Activated CD4-positive, alpha-beta T cell treated with anti-CD3 and anti-CD28 coated beads, Interleukin-2, amount 10 ng/mL, durations not matched to agents 7 days and 5 days (primary cell): ENCODE measurements at regions of chr5 and their contacts with region 1.

Region 1: GRCh38 chr5:151771259-151772028 is at the start of gene G3BP1:
- DNase-seq: peak; percentile 100
- H3K4me3 Mint-ChIP-seq: peak within 1 kb of the TSS; percentile 81
- H3K27ac Mint-ChIP-seq: peak within 1 kb of the TSS; percentile 94
- H3K4me1 Mint-ChIP-seq: peaks cover 37% of the 10 kb centered on the region
- H3K27me3 Mint-ChIP-seq: no peaks in the 10 kb centered on the region
- total RNA-seq, gene G3BP1: 212 to 221 TPM

Region 2: DNA sequence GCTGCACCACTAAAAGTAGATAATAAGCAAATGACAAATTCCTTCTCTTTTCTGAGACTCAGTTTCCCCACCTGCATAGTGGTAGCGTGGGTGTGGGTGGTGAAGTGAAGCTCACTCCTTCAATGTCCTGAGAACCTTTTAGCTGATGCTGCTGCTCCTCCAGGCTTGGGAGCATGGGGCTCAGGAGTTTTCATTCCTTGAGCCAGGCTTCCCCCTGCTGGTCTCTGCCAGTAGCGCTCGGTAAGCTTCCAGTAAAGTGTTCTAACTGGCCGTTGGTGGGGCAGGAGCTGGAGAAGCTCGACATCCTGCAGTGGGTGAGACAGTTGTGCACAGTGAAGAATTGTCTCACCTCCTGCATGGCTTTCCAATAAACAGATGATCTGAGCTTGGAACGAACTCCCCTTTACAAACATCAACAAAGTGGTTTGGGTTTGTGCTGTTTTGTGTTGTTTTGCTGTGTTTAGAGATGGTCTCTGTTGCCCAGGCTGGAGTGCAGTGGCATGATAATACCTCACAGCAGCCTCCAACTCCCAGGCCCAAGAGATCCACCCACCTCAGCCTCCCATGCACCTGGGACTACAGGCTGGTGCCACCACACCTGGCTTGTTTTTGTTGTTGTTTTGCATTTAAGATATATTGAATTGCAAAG is 119.3 kb before region 1 on chr5:
- CTCF ChIA-PET with region 1: interaction called, 14 read pairs
- POLR2A ChIA-PET with region 1: no interaction called
- DNase-seq: peak; percentile 72
- H3K4me3 Mint-ChIP-seq: no peak overlapping the region
- H3K27ac Mint-ChIP-seq: no peak overlapping the region
- H3K4me1 Mint-ChIP-seq: no peaks in the 10 kb centered on the region
- H3K27me3 Mint-ChIP-seq: peaks cover 8% of the 10 kb centered on the region

Region 3: DNA sequence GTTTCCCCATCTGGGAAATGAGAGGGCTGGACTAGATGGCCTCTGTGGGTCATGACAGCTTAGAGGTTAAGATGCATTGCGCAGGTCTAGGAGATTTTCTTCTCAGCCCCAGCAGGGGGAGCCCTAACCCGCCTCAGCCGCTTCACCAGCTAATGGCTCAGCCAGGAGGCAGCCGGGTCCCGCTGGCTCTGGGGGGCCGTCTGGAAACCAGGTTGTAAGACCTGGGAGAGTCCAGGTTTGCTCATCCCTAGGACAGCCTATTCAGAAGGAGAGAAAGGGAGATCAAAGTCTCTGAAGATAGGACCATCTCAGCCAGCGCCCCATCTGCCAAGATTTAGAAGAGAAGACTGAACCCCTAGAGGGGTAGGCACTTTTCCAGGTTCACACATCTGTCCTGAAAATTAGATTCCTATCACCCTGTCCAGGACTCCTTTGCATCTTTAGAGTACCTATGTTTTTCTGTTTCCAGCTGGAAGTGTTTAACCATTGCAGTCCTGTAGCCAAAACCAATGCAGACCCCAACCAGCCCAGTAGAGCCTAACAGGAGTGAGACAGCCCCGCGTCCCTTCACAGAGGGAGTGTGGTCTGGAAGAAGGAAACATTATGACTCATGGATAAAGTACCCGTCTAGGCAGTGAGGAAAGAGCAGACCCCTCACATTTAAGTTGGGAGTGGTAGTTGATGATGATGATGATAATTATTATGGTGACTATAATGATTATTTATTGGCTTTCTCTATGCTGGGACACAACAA is 112.3 kb before region 1 on chr5:
- CTCF ChIA-PET with region 1: interaction called, 10 read pairs
- POLR2A ChIA-PET with region 1: interaction called, 3 read pairs
- DNase-seq: peak; percentile 82
- H3K4me3 Mint-ChIP-seq: no peak overlapping the region
- H3K27ac Mint-ChIP-seq: no peak overlapping the region
- H3K4me1 Mint-ChIP-seq: peaks cover 12% of the 10 kb centered on the region
- H3K27me3 Mint-ChIP-seq: peaks cover 16% of the 10 kb centered on the region

Region 4: GRCh38 chr5:151750121-151750520 is 21.3 kb before region 1 on chr5:
- CTCF ChIA-PET with region 1: interaction called, 40 read pairs
- POLR2A ChIA-PET with region 1: interaction called, 3 read pairs
- DNase-seq: no peak
- H3K4me3 Mint-ChIP-seq: no peak overlapping the region
- H3K27ac Mint-ChIP-seq: peak overlapping the region; percentile 71
- H3K4me1 Mint-ChIP-seq: peaks cover 47% of the 10 kb centered on the region
- H3K27me3 Mint-ChIP-seq: no peaks in the 10 kb centered on the region

Region 5: DNA sequence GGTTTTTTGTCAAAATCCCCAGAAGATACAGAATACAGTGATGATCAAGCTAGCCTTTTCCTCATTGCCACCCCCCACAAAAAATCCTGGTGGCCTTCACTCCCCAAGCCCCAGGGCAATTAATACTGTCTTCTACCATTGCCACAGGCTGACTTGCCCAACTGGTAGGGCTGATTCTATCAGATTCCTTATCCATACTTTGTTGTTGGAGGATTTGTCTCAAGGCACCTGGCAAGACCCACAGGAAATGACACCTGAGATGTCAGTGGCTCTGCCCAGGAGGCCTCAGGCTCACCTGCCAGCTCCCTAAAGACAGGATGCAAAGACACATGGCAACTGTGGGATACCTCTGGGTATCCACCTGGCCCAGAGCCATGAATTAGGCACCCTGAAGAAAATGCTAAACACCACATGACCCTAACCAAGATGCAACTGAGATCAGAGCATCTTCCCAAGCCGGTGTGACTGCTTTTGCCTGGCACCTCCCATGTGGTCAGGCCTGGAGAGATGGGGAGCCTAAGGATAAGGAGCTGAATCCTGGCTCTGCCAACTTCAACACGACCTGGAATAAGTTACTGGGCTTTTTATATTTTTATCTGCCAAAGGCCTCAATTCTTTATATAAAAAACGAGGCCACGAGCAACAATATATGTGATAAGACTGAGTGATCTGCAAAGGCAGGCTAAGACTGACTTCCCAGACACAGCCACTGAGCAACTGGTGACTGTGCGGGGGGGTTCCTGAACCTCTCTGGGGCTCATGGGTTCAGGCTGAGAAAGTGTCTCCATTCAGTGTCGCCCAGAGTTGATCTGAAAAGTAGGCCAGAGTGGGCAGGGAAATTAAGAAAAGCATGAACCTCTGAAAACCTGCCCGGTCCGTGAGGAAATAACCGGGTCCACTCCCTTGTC is 14.0 kb before region 1 on chr5:
- CTCF ChIA-PET with region 1: interaction called, 40 read pairs
- POLR2A ChIA-PET with region 1: interaction called, 3 read pairs
- DNase-seq: peak; percentile 15
- H3K4me3 Mint-ChIP-seq: peak overlapping the region; percentile 76
- H3K27ac Mint-ChIP-seq: peak overlapping the region; percentile 85
- H3K4me1 Mint-ChIP-seq: peaks cover 39% of the 10 kb centered on the region
- H3K27me3 Mint-ChIP-seq: no peaks in the 10 kb centered on the region

Region 6: GRCh38 chr5:151787817-151788216 is 16.4 kb after region 1 on chr5:
- CTCF ChIA-PET with region 1: interaction called, 5 read pairs
- POLR2A ChIA-PET with region 1: interaction called, 12 read pairs
- DNase-seq: no peak
- H3K4me3 Mint-ChIP-seq: no peak overlapping the region
- H3K27ac Mint-ChIP-seq: no peak overlapping the region
- H3K4me1 Mint-ChIP-seq: peaks cover 21% of the 10 kb centered on the region
- H3K27me3 Mint-ChIP-seq: no peaks in the 10 kb centered on the region